ENCODE measurements at regions of chr6 and their contacts with region 1.

Region 1: DNA sequence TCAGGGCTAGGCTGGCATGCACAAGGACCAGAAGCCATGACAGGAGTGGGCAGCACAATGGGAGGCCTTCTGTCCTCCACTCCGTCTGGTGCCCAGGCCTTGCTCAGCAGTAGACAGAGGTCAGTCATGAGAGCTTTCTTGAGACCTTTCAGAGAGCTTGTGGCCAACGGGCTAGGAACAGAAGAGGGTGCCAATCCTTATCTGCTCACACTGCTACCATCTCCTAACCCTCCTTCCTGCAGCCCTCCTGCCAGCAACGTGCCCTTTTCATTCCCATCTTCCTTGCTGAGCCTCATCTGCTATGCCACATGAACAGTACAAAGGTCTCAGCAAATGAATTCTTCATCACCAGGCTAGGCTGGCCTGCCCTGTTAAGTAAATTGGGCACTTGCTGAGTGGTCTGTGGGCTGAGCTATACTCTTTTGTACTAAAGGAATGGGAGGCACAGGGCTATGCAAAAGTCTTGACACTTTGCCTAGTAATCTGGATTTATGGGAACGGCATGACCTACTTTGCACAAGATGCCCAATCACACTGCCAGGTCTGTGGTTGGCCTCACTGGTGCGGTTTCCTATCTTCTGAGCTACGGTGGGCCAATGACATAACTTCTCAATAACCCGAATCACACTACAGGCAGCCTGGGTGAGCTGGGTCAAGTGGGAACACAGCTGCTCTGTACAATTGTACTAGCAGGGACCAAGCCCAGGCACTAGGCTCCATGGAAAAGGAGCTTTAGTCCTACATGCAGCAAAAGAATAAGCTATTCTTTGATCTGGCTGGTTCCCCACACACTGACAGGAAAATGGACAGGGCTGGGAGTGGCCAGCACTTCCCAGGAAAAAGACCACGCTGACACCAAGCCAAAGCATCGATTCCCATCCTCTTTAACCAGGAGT is 47.8 kb downstream of the ELOVL5 start:
- DNase-seq: no peak
- ATAC-seq: peak; percentile 47
- H3K4me3 ChIP-seq: no peak overlapping the region
- H3K27ac ChIP-seq: no peak overlapping the region
- H3K4me1 ChIP-seq: peaks cover 4% of the 10 kb centered on the region
- H3K27me3 ChIP-seq: no peaks in the 10 kb centered on the region
- CTCF ChIP-seq: no peak
- EP300 ChIP-seq: no peak
- POLR2A ChIP-seq: no peak
- RAD21 ChIP-seq: no peak

Region 2: GRCh38 chr6:53335208-53335994 is 34.5 kb after region 1 on chr6:
- CTCF ChIA-PET with region 1: interaction called, 5 read pairs
- POLR2A ChIA-PET with region 1: interaction called, 8 read pairs
- RAD21 ChIA-PET with region 1: interaction called, 9 read pairs
- SMC1A ChIA-PET with region 1: interaction called, 135 read pairs
- in situ Hi-C with region 1: no loop called
- intact Hi-C with region 1: no loop called
- DNase-seq: peak; percentile 88
- ATAC-seq: peak; percentile 90
- H3K4me3 ChIP-seq: peak overlapping the region; percentile 72
- H3K27ac ChIP-seq: peak overlapping the region; percentile 85
- H3K4me1 ChIP-seq: peaks cover 22% of the 10 kb centered on the region
- H3K27me3 ChIP-seq: no peaks in the 10 kb centered on the region
- CTCF ChIP-seq: no peak
- EP300 ChIP-seq: peak in 1 of 2 experiments; percentile 68; a peak in 2 of 4 replicates
- POLR2A ChIP-seq: peak; percentile 34; the same call in 1 of the 2 replicates
- RAD21 ChIP-seq: no peak

Region 3: GRCh38 chr6:53342217-53342616 is 41.3 kb after region 1 on chr6:
- CTCF ChIA-PET with region 1: interaction called, 7 read pairs
- POLR2A ChIA-PET with region 1: interaction called, 8 read pairs
- RAD21 ChIA-PET with region 1: interaction called, 15 read pairs
- SMC1A ChIA-PET with region 1: interaction called, 135 read pairs
- in situ Hi-C with region 1: no loop called
- intact Hi-C with region 1: no loop called
- DNase-seq: no peak
- ATAC-seq: peak; percentile 28
- H3K4me3 ChIP-seq: peak overlapping the region; percentile 5; the same call in 1 of the 2 replicates
- H3K27ac ChIP-seq: no peak overlapping the region
- H3K4me1 ChIP-seq: peaks cover 23% of the 10 kb centered on the region
- H3K27me3 ChIP-seq: no peaks in the 10 kb centered on the region
- CTCF ChIP-seq: no peak
- EP300 ChIP-seq: no peak
- POLR2A ChIP-seq: no peak
- RAD21 ChIP-seq: no peak

Measured in GM12878 (cell line).